Activated CD4-positive, alpha-beta T cell treated with anti-CD3 and anti-CD28 coated beads for 36 hours (primary cell): ENCODE measurements at regions of chr14 and their contacts with region 1.

Region 1: GRCh38 chr14:50830932-50831725 is at the start of gene NIN:
- DNase-seq: peak; percentile 84
- ATAC-seq: peak; percentile 89
- H3K4me3 Mint-ChIP-seq: peak within 1 kb of the TSS; percentile 91
- H3K27ac Mint-ChIP-seq: peak within 1 kb of the TSS; percentile 88
- H3K4me1 Mint-ChIP-seq: peaks cover 56% of the 10 kb centered on the region
- H3K27me3 Mint-ChIP-seq: peaks cover 6% of the 10 kb centered on the region
- total RNA-seq, gene NIN: 47.5 to 53.8 TPM

Region 2: DNA sequence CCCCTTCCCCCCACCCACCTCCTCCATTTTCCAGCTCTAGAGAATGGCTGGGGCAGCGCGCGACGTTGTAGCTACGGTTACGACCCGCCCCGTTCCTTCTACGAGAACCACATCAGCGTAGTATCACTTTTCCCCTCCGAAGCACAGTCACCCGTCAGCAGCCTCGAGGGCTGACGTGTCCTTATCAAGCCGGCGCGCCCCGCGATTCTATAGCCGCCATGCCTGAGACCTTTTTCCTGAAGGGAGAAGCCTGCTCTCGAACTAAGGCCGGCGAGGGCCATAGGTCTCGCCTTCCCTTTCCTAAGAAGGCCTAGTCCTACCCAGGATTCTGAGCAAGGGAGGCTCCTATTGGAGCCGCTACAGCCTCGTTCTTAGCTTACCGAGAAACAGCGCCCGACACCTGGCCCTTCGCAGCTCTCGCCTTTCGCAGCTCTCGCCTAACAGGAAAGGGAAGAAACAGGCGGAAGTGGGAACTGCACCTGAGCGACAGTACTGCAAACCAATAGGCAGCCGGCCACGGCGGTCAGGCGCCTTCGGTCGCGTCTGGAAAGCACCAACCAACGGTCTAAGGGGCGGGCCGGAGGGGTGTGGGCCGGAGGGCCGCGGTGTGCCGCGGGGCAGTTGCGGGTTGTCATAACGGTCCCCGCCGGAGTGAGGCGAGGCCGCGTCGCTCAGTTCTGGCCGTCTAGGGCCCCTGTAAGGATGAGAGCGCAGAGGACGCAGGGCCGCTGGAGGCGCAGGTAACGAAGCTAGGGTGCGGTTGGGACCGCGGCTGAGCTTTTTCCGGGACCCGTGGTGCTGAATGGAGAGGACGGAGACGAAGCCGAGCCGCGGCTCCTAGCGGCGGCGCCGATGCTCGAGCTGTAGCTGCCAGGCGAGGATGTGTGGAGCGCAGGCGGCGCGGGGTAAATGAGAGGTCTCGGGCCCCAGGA is 1210.7 kb before region 1 on chr14 and contains the starts of genes MGAT2 and RPL36AL:
- CTCF ChIA-PET with region 1: interaction called, 4 read pairs
- POLR2A ChIA-PET with region 1: no interaction called
- intact Hi-C with region 1: loop called in 1 of 2 experiments (anchors 2 kb)
- DNase-seq: peak; percentile 97
- ATAC-seq: peak; percentile 90
- H3K4me3 Mint-ChIP-seq: peak within 1 kb of the TSS; percentile 93
- H3K27ac Mint-ChIP-seq: peak within 1 kb of the TSS; percentile 97
- H3K4me1 Mint-ChIP-seq: peaks cover 51% of the 10 kb centered on the region
- H3K27me3 Mint-ChIP-seq: no peaks in the 10 kb centered on the region
- total RNA-seq, gene MGAT2: 23.8 to 32.2 TPM
- total RNA-seq, gene RPL36AL: 272 to 309 TPM

Region 3: GRCh38 chr14:50116181-50116956 is 714.8 kb before region 1 on chr14 and contains the start of gene VCPKMT:
- CTCF ChIA-PET with region 1: no interaction called
- POLR2A ChIA-PET with region 1: interaction called, 4 read pairs
- intact Hi-C with region 1: loop called in 1 of 2 experiments (anchors 1 kb)
- DNase-seq: peak; percentile 98
- ATAC-seq: peak; percentile 99
- H3K4me3 Mint-ChIP-seq: peak within 1 kb of the TSS; percentile 95
- H3K27ac Mint-ChIP-seq: peak within 1 kb of the TSS; percentile 97
- H3K4me1 Mint-ChIP-seq: peaks cover 25% of the 10 kb centered on the region
- H3K27me3 Mint-ChIP-seq: no peaks in the 10 kb centered on the region
- total RNA-seq, gene VCPKMT: 6.6 to 10.4 TPM

Region 4: GRCh38 chr14:50813544-50813863 is 17.6 kb before region 1 on chr14:
- CTCF ChIA-PET with region 1: interaction called, 6 read pairs
- POLR2A ChIA-PET with region 1: interaction called, 4 read pairs
- intact Hi-C with region 1: loop called in 1 of 2 experiments (anchors 1 kb)
- DNase-seq: no peak
- ATAC-seq: peak; percentile 83
- H3K4me3 Mint-ChIP-seq: peak overlapping the region; percentile 54
- H3K27ac Mint-ChIP-seq: peak overlapping the region; percentile 95
- H3K4me1 Mint-ChIP-seq: peaks cover 39% of the 10 kb centered on the region
- H3K27me3 Mint-ChIP-seq: no peaks in the 10 kb centered on the region

Region 5: DNA sequence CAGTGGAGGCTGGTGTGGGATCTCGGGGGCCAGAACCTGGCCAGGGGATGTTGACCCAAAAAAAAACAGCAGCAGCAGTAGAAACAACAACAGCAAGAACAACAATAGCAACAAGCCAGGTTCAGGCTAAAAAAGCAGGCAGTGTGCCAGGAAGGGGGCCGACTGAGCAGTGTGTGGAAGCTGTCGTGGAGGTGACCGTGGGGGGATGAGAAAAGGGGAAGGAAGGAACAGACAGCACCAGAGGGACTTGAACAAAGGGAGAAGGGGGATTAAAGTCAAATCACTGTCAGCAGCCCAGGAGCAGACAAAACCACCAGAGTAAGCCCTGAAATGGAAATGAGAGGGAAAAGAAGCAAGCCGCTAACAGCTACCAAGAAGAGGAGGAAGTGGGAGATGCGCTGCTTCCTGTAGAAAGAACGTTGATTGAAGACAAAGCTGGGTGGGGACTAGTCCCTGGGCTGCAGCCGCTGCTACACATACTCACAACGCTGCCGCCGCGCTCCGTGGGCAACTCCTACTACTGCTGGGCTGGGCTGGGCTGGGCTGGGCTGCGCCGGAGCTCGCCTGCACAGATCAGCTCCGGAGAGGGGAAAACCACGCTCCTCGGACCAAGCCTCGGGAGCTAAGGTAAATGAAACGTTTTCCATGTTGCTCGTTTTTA is 1029.2 kb after region 1 on chr14 and contains the start of gene GNG2:
- CTCF ChIA-PET with region 1: no interaction called
- POLR2A ChIA-PET with region 1: no interaction called
- intact Hi-C with region 1: loop called in 1 of 2 experiments (anchors 10 kb)
- DNase-seq: peak; percentile 90
- ATAC-seq: peak; percentile 93
- H3K4me3 Mint-ChIP-seq: peak within 1 kb of the TSS; percentile 90
- H3K27ac Mint-ChIP-seq: peak within 1 kb of the TSS; percentile 82
- H3K4me1 Mint-ChIP-seq: peaks cover 50% of the 10 kb centered on the region
- H3K27me3 Mint-ChIP-seq: no peaks in the 10 kb centered on the region
- total RNA-seq, gene GNG2: 133 to 136 TPM